A549 (cell line): ENCODE measurements at regions of chr6 and their contacts with region 1.

Region 1: DNA sequence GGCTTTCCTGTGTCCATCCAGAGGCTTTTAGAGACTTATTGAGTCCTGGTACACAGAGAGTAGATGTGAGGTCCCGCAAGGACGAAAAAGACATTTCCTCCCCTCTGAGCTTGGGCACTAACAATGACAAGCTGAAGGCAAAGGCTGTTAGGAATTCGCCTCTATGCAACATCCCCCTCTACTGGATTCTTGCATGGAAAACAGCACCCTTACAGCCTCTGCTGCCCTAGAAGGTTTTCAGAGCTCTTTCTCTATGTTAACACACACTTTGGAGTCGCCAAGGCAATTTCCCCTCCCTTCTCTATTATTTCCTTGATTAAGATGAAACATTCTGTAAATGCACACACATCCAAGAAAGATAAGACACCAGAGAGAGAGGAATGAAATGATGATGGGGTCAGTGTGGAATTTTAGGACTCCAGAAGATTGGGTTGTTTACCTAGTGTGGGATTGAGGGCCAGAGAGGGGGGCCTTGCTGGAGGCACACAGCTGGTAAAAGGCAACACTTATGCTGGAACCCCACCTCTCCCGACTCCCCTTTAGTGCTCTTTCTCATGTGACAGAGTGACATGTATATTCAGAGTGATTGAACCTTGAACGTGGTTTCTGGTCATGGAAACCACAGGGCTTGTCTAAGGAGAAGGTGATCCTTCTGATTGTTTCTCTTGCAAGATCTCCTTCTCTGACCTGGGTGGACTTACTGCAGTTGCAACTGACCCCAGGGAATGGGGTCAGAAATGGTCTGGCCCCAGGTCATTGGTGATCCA is 300.7 kb downstream of the CLIC5 start:
- DNase-seq: peak; percentile 61 to 67
- ATAC-seq: peak; percentile 93 to 97
- H3K4me3 ChIP-seq: no peak overlapping the region
- H3K27ac ChIP-seq: peak overlapping the region; percentile 33 to 75; a peak in 5 of 6 replicates
- H3K4me1 ChIP-seq: peaks cover 20% of the 10 kb centered on the region
- CTCF ChIP-seq: peak; percentile 65
- EP300 ChIP-seq: no peak
- POLR2A ChIP-seq: no peak
- RAD21 ChIP-seq: peak; percentile 90

Region 2: GRCh38 chr6:45421709-45422502 is 293.0 kb before region 1 on chr6:
- CTCF ChIA-PET with region 1: interaction called, 27 read pairs
- POLR2A ChIA-PET with region 1: interaction called, 4 read pairs
- DNase-seq: peak; percentile 11 to 42
- ATAC-seq: peak; percentile 81 to 87
- H3K4me3 ChIP-seq: peak overlapping the region; percentile 60
- H3K27ac ChIP-seq: peak overlapping the region; percentile 58 to 86
- H3K4me1 ChIP-seq: peaks cover 18% of the 10 kb centered on the region
- CTCF ChIP-seq: peak; percentile 29; the same call in 2 of the 3 replicates
- EP300 ChIP-seq: no peak
- POLR2A ChIP-seq: no peak
- RAD21 ChIP-seq: peak in 1 of 2 experiments; percentile 20; a peak in 1 of 5 replicates

Region 3: GRCh38 chr6:45791211-45792168 is 76.6 kb after region 1 on chr6:
- CTCF ChIA-PET with region 1: no interaction called
- POLR2A ChIA-PET with region 1: no interaction called
- DNase-seq: no peak
- ATAC-seq: no peak
- H3K4me3 ChIP-seq: no peak overlapping the region
- H3K27ac ChIP-seq: no peak overlapping the region
- H3K4me1 ChIP-seq: no peaks in the 10 kb centered on the region
- CTCF ChIP-seq: no peak
- EP300 ChIP-seq: no peak
- POLR2A ChIP-seq: no peak
- RAD21 ChIP-seq: no peak